Prostate gland (tissue), 2 donors: ENCODE measurements at regions of chr6 and their contacts with region 1.

Region 1: DNA sequence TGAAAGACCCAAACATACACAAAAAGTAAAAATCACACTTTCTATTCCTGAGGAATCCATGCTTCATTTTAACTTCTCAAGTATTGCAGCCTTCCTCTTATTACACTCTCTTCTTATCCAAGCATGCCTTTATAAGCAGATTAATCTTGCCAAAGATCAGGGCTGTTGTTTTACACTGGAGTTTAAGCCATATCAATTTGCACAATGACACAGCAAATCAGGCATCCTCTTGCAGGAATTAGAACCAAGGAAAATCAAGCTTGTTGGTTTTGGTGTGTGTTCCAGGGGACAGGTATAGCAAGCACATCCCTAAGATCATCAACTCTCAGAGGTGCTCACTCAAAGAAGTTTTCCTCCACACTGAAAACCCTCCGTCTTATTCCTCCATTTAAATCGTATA is 69.5 kb downstream of the CYP39A1 start:
- DNase-seq: no peak
- H3K4me3 ChIP-seq: no peak overlapping the region
- H3K27ac ChIP-seq: peak overlapping the region in 1 of 2 donors; percentile 1
- H3K4me1 ChIP-seq: no peaks in the 10 kb centered on the region
- H3K27me3 ChIP-seq: no peaks in the 10 kb centered on the region
- CTCF ChIP-seq: no peak
- POLR2A ChIP-seq: no peak

Region 2: DNA sequence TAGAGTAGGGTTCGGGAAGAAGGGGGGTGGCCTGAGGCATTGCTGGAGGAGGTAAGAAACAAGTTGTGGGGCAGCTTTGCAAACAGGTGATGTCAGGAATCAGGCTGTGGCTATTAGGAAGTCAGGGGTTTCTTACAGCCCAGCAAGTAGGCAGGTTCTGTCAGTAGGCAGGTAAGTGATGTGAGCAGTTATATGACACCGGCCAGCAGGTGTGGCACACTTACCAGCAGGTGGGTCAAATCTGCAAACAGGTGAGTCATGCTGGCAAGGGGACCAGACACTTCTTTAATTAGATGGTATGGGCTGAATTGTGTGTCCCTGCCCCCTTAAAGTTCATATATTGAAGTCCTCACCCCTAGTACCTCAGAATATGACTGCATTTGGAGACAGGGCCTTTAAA is 469.7 kb before region 1 on chr6:
- intact Hi-C with region 1: no loop called
- DNase-seq: no peak
- H3K4me3 ChIP-seq: no peak overlapping the region
- H3K27ac ChIP-seq: no peak overlapping the region
- H3K4me1 ChIP-seq: no peaks in the 10 kb centered on the region
- H3K27me3 ChIP-seq: no peaks in the 10 kb centered on the region
- CTCF ChIP-seq: no peak
- POLR2A ChIP-seq: no peak

Region 3: DNA sequence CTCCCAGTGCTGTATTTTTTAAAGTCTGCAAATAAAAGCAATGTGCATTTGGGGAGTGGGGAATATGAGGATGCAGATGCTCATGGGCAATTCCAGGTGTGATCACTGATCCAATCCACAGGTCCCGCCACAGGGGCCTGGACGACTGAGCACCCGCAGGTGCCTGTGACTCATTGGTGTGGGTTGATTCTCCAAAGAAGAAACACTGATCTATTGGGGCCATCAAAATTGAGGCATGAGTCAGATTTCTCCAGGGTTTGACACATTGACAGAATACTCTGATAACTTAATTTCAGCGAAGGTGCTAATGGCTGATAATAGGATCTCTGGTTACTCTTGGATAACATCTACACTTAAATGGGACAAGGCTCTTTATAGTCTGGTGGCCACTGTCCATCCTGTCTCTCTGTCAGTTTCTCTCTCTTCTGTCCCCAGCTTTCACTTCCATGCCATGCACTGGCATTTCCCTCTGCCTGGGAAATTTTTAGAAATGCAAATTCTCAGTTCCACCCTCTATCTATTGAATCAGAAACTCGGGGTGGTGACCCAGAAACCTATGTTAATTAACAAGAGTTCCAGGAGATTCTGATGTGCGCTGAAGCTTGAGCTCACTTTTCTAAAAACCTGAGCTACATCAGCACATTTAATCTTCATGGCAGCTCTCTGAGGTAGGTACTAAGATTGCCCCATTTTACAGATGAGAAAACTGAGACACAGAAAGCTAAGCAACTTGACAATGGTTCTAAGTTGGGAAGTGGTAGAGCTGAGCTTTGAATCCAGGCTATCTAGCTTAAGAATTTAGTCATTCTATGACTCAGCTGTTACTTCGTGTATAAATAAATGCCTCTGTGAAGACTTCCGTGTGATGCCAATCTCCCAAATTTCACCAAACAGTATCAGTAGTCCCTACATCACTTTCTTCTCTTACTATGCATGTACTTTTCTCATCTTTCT is 81.7 kb before region 1 on chr6:
- intact Hi-C with region 1: loop called (anchors 10 kb)
- DNase-seq: no peak
- H3K4me3 ChIP-seq: no peak overlapping the region
- H3K27ac ChIP-seq: peak overlapping the region in 1 of 2 donors; percentile 3
- H3K4me1 ChIP-seq: no peaks in the 10 kb centered on the region
- H3K27me3 ChIP-seq: no peaks in the 10 kb centered on the region
- CTCF ChIP-seq: no peak
- POLR2A ChIP-seq: no peak

Region 4: DNA sequence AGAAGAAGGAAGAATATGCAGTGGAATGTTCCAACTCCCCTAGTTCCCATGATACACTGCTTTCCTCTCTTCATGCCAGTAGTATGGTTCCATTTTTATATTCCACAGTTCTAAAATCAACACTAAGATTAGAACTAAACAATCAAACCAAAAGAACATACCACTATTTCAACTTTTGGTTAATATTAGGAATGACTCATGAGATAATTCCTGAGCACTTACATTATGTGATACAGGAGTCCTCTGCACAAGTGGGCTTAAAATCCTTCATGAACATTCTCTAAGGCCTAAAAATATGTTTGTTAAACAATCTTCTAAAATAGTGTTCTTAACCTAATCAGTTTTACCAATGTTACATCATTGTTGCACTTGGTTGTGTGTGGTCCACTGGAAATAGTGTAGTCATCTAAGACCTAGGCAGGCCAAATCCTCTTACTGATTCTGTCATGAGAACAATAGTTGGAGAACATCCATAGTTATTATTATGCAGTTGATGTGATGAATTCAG is 61.6 kb before region 1 on chr6:
- intact Hi-C with region 1: no loop called
- DNase-seq: no peak
- H3K4me3 ChIP-seq: no peak overlapping the region
- H3K27ac ChIP-seq: no peak overlapping the region
- H3K4me1 ChIP-seq: no peaks in the 10 kb centered on the region
- H3K27me3 ChIP-seq: no peaks in the 10 kb centered on the region
- CTCF ChIP-seq: no peak
- POLR2A ChIP-seq: no peak

Region 5: DNA sequence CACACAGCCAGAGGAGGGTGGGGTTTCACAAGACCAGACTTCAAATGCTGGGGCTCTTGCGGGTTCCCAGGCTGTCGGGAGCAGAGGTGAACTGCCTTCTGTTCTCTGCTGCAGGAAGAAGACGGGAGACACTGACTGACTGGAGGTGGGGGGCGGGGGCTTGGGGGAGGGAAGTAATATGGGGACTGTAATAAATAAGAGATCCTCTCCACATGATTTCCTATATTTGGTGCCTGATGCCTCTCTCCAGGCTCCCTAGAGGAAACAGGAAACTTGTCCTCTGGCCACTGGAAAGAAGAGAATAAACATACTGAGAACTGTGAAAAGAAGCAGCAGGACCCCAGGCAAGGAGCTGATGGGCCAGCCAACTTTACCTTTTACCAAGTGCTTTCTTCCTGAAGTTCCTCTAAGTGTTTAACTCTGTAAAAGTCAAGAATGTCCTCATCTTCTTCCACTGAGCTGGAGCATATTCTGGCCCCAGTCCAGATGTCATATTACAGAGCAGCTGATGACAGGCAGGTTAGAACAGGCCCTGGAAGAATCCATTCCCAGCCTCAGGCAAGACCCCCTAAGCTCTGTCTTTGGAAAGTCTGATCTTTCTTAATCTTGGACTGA is 371.9 kb after region 1 on chr6:
- intact Hi-C with region 1: no loop called
- DNase-seq: no peak
- H3K4me3 ChIP-seq: no peak overlapping the region
- H3K27ac ChIP-seq: no peak overlapping the region
- H3K4me1 ChIP-seq: no peaks in the 10 kb centered on the region
- H3K27me3 ChIP-seq: no peaks in the 10 kb centered on the region
- CTCF ChIP-seq: no peak
- POLR2A ChIP-seq: no peak